Mucosa of descending colon (tissue), 3 donors: ENCODE measurements at regions of chr17 and their contacts with region 1.

Region 1: GRCh38 chr17:2041561-2042366 is at the start of gene OVCA2:
- DNase-seq: peak; percentile 96 to 97 (median 97)
- ATAC-seq: peak; percentile 98
- H3K4me3 ChIP-seq: peak within 1 kb of the TSS; percentile 62
- H3K4me1 ChIP-seq: peaks cover 7% of the 10 kb centered on the region
- CTCF ChIP-seq: no peak
- total RNA-seq, gene OVCA2: 25.3 to 35.5 (median 33.0) TPM

Region 2: DNA sequence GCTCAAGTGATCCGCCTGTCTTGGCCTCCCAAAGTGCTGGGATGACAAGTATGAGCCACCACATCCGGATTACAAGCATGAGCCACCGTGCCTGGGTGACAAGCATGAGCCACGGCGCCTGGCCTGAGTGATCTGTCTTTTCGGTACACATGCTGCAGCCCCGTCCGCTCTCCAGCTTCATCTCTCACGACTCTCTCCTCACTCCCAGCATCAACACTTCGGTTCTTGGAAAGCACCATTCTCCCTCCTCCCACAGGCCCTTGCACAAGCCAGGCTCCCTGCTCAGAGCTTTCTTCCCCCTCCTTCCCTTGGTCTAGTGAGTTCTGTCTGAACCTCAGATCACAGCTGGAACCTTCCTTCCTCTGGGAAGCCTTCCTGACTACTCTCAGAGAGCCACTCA is 1810.8 kb after region 1 on chr17:
- intact Hi-C with region 1: loop called in 1 of 2 experiments (anchors 10 kb)
- DNase-seq: peak in 2 of 3 donors; percentile 7 to 20
- ATAC-seq: no peak
- H3K4me3 ChIP-seq: no peak overlapping the region
- H3K4me1 ChIP-seq: no peaks in the 10 kb centered on the region
- CTCF ChIP-seq: no peak